ENCODE measurements at regions of chr19 and their contacts with region 1.

Region 1: DNA sequence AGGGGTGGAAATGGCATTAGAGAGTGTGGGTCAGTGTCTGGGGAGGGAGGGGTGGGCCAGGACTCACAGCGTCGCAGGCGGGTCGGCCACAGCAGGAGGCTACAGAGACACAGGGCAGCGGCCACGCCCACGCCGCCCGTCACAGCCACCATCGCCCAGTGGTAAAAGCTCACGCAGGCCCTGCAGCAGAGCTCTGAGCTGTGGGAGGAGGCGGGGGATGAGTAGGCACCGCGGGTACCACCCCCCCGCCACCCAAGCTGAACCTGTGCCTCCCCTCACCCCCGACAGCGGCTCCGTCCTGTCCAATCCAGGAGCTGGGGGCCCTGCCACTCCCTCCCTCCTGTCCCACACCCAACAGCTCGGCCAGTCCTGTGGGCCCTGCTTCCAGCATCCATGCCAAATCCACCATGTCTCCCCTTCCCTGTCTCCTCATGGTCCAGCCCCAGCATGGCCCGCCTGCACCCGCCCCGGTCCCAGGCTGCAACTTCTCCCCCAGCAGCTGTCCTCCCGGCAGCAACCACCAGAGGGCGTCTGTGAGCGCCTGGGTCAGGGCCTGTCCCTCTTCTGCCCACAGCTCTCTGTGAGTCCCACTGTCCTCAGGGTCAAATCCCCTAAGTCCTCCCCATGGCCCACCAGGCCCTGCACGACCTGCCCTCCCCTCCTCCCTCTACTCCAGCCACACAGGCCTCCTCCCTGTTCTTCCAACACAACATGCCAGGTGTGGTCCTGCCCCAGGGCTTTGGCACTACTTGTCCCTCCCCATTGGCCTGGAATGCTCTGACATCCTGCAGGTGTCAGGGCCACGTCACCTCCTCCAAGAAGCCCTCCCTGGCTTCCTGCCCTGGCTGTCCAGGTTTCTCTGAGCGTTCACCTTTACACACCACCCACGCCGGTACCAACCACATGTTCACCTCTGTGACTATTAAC is 6.0 kb downstream of the TEKTIP1 start:
- DNase-seq: peak; percentile 47
- H3K4me3 ChIP-seq: no peak overlapping the region
- H3K27ac ChIP-seq: no peak overlapping the region
- H3K4me1 ChIP-seq: no peaks in the 10 kb centered on the region
- H3K27me3 ChIP-seq: no peaks in the 10 kb centered on the region
- CTCF ChIP-seq: peak; percentile 90 to 99
- POLR2A ChIP-seq: no peak

Region 2: GRCh38 chr19:3563745-3564524 is 18.9 kb after region 1 on chr19:
- CTCF ChIA-PET with region 1: interaction called, 34 read pairs
- POLR2A ChIA-PET with region 1: no interaction called
- dilution Hi-C with region 1: no loop called
- intact Hi-C with region 1: no loop called
- DNase-seq: no peak
- H3K4me3 ChIP-seq: no peak overlapping the region
- H3K27ac ChIP-seq: no peak overlapping the region
- H3K4me1 ChIP-seq: no peaks in the 10 kb centered on the region
- H3K27me3 ChIP-seq: no peaks in the 10 kb centered on the region
- CTCF ChIP-seq: no peak
- POLR2A ChIP-seq: no peak

Region 3: GRCh38 chr19:3586124-3586626 is 41.2 kb after region 1 on chr19:
- CTCF ChIA-PET with region 1: interaction called, 22 read pairs
- POLR2A ChIA-PET with region 1: no interaction called
- dilution Hi-C with region 1: no loop called
- intact Hi-C with region 1: no loop called
- DNase-seq: no peak
- H3K4me3 ChIP-seq: peak overlapping the region; percentile 16 to 40 (median 25)
- H3K27ac ChIP-seq: no peak overlapping the region
- H3K4me1 ChIP-seq: peaks cover 5% of the 10 kb centered on the region
- H3K27me3 ChIP-seq: no peaks in the 10 kb centered on the region
- CTCF ChIP-seq: peak; percentile 62 to 80
- POLR2A ChIP-seq: no peak

Region 4: DNA sequence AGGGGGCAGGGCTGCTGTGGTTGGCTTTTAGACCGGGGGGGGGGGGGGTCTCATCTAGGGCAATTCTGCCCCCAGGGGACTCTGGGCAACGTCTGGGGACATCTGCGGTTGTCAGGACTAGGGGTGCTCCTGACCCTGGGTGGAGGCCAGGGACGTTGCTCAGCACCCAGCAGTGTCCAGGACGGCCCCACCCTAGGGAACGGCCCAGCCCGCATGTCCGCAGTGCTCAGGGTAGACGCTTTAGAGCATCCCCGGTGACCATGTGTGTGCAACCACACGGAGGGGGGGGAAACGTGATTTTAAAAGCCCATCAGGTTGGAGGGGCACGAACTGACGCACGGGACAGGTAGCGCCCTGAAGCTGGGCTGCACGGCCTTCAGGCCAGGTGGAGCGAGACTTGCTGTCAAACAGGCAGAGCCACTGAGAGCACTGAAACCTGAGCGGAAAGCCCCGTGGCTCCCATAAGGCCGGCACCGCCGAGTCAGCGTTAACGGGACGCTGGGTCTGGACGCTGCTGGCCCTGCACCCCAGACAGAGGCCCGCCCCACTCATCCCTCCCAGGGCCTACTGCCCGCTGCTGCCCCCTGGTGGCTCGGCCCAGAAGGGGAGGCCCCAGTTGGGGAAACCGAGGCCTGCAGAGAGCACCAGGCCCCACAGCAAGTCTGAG is 73.3 kb after region 1 on chr19:
- CTCF ChIA-PET with region 1: interaction called, 13 read pairs
- POLR2A ChIA-PET with region 1: no interaction called
- dilution Hi-C with region 1: no loop called
- intact Hi-C with region 1: loop called (anchors 1 kb)
- DNase-seq: peak; percentile 38
- H3K4me3 ChIP-seq: no peak overlapping the region
- H3K27ac ChIP-seq: no peak overlapping the region
- H3K4me1 ChIP-seq: no peaks in the 10 kb centered on the region
- H3K27me3 ChIP-seq: no peaks in the 10 kb centered on the region
- CTCF ChIP-seq: peak; percentile 85 to 97
- POLR2A ChIP-seq: no peak

Region 5: DNA sequence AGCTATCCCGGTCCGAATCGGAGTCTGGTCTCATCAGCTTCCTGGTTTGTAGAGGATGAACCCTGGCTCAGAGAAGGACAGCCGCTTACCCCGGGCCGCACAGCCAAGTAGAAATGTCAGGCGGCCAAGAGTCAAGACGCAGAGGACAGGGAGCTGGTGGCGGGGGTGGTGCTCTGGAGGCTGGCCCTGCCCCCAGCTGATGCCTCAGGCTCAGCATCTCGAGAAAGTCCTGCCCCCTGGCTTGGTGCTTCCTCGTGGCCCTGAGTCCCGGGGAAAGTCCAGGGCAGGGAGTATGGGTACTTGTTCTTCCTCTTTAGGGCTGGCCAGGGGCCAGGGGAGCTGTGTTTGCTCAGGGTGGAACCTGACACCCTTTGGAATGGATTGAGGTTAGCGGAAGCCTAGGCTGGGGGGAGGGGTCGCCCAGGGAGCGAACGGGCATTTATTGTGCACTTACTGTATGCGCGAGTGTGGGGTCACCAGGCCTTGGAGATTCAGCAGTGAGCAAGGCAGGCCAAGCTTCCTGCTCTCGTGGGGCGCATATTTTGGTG is 165.3 kb after region 1 on chr19:
- CTCF ChIA-PET with region 1: interaction called, 23 read pairs
- POLR2A ChIA-PET with region 1: no interaction called
- dilution Hi-C with region 1: no loop called
- intact Hi-C with region 1: loop called (anchors 1 kb)
- DNase-seq: no peak
- H3K4me3 ChIP-seq: no peak overlapping the region
- H3K27ac ChIP-seq: no peak overlapping the region
- H3K4me1 ChIP-seq: no peaks in the 10 kb centered on the region
- H3K27me3 ChIP-seq: peaks cover 0 to 1% of the 10 kb centered on the region in 2 experiments
- CTCF ChIP-seq: no peak
- POLR2A ChIP-seq: no peak

Measured in endothelial cell of umbilical vein (primary cell).